ENCODE measurements at regions of chr1 and their contacts with region 1.

Region 1: DNA sequence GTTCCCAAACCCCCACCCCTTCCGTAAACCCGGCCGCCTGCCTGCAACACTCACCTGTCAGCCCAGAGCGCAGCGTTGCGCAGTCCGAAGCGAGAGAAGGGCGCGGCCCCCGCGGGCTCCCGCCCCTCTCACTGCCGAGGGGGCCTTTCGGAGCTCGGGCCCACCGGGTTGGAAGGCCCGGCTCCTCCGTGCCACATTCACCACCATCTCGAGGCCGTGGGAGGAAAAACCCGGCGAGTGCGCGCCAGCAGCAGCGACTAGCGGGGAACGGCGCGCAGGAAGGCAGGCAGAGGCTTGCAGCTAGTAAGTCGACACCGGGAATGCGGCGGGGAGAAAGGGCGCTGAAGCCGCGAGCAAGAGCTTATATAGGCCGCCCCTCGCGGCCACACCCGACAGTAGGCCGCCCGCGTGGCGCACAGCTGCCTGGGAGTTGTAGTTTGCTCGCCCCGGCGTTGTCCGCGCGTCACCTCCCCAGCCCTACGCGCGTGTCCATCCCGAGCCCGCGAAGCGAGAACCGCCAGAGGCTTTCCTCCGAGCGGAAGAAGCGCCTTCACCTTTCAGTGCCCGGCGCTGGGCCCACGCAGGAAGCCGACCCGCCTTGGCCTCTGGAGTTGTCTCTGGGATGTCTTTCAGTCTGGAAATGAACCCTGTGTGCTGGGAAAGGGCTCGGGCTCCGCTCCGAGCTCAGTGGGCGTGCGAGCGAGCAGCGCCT is 10.4 kb upstream of the RAB42 start:
- DNase-seq: peak; percentile 95
- ATAC-seq: peak; percentile 73
- H3K4me3 Mint-ChIP-seq: peak overlapping the region; percentile 92
- H3K27ac Mint-ChIP-seq: peak overlapping the region; percentile 83; the same call in 1 of the 2 replicates
- H3K4me1 Mint-ChIP-seq: peaks cover 24% of the 10 kb centered on the region
- H3K27me3 Mint-ChIP-seq: no peaks in the 10 kb centered on the region
- CTCF ChIP-seq: no peak

Region 2: DNA sequence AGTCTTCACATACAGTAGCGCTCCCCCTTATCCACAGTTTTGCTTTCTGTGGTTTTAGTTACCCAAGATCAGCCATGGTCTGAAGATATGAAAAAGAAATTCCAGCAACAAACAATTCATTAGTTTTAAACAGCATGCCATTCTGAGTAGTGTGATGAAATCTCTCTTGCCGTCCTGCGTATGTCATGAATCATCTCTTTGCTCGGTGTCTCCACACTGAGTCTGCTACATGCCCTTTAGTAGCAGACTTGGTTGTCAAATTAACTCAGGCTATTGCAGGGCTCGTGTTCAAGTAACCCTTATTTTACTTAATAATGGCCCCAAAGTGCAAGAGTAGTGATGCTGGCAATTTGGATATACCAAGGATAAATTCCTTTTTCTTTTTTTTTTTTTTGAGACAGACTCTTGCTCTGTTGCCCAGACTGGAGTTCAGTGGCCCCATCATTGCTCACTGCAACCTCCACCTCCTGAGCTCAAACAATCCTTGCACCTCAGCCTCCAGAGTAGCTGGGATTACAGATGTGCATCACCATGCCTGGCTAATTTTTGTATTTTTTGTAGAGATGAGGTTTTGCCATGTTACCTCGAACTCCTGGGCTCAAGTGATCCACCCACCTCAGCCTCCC is 189.6 kb before region 1 on chr1:
- CTCF ChIA-PET with region 1: no interaction called
- POLR2A ChIA-PET with region 1: no interaction called
- DNase-seq: no peak
- ATAC-seq: no peak
- H3K4me3 Mint-ChIP-seq: no peak overlapping the region
- H3K27ac Mint-ChIP-seq: peak overlapping the region; percentile 92
- H3K4me1 Mint-ChIP-seq: peaks cover 2% of the 10 kb centered on the region; the same call in 1 of the 2 replicates
- H3K27me3 Mint-ChIP-seq: no peaks in the 10 kb centered on the region
- CTCF ChIP-seq: no peak

Region 3: GRCh38 chr1:28505406-28506187 is 76.1 kb before region 1 on chr1 and contains the start of gene RCC1:
- CTCF ChIA-PET with region 1: no interaction called
- POLR2A ChIA-PET with region 1: interaction called, 19 read pairs
- DNase-seq: peak; percentile 97
- ATAC-seq: peak; percentile 76
- H3K4me3 Mint-ChIP-seq: peak within 1 kb of the TSS; percentile 99
- H3K27ac Mint-ChIP-seq: peak within 1 kb of the TSS; percentile 99
- H3K4me1 Mint-ChIP-seq: peaks cover 30% of the 10 kb centered on the region
- H3K27me3 Mint-ChIP-seq: peaks cover 7% of the 10 kb centered on the region
- CTCF ChIP-seq: no peak
- total RNA-seq, gene RCC1: 93.2 to 103 TPM (median 98.2 TPM) in 3 replicates

Region 4: GRCh38 chr1:28518000-28518744 is 63.5 kb before region 1 on chr1:
- CTCF ChIA-PET with region 1: interaction called, 3 read pairs
- POLR2A ChIA-PET with region 1: interaction called, 22 read pairs
- DNase-seq: peak; percentile 96
- ATAC-seq: peak; percentile 40
- H3K4me3 Mint-ChIP-seq: peak overlapping the region; percentile 80
- H3K27ac Mint-ChIP-seq: peak overlapping the region; percentile 87
- H3K4me1 Mint-ChIP-seq: peaks cover 44% of the 10 kb centered on the region
- H3K27me3 Mint-ChIP-seq: no peaks in the 10 kb centered on the region
- CTCF ChIP-seq: peak; percentile 99

Region 5: DNA sequence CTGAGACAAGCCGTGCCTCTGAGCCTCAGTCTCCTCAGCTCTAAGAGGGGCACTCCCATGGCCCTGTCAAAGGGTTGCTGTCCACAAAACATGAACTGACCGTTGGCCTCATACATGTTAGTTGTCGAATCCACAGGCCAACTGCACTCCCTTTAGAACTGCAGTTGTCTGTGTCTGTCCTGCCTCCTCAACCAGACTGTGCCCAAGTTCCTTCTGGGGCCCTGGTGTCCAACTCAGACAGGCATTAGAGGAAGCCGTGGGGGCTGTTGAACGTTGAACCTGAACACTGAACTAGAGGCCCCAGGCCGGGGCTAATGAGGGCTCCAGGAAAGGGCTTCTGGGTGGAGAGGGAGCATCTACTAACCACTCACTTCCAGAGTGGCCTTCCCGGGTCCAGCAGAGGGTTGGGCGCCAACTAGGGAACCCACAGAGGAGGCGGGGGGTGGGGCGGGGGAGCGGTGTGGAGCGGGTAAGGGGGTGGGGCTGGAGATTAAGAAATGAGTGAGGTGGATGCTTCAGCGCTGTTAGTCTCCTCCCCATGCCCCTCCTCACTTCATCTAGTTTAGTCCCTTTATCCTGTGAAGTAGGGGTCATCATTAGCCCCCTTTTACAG is 10.1 kb after region 1 on chr1 and contains the start of gene RAB42:
- CTCF ChIA-PET with region 1: interaction called, 3 read pairs
- POLR2A ChIA-PET with region 1: interaction called, 18 read pairs
- DNase-seq: peak; percentile 48
- ATAC-seq: peak; percentile 67
- H3K4me3 Mint-ChIP-seq: peak within 1 kb of the TSS; percentile 82
- H3K27ac Mint-ChIP-seq: peak within 1 kb of the TSS; percentile 70; the same call in 1 of the 2 replicates
- H3K4me1 Mint-ChIP-seq: peaks cover 43% of the 10 kb centered on the region
- H3K27me3 Mint-ChIP-seq: peaks cover 15% of the 10 kb centered on the region
- CTCF ChIP-seq: no peak
- total RNA-seq, gene RAB42: 8.9 to 12.6 TPM (median 10.1 TPM) in 3 replicates

Region 6: DNA sequence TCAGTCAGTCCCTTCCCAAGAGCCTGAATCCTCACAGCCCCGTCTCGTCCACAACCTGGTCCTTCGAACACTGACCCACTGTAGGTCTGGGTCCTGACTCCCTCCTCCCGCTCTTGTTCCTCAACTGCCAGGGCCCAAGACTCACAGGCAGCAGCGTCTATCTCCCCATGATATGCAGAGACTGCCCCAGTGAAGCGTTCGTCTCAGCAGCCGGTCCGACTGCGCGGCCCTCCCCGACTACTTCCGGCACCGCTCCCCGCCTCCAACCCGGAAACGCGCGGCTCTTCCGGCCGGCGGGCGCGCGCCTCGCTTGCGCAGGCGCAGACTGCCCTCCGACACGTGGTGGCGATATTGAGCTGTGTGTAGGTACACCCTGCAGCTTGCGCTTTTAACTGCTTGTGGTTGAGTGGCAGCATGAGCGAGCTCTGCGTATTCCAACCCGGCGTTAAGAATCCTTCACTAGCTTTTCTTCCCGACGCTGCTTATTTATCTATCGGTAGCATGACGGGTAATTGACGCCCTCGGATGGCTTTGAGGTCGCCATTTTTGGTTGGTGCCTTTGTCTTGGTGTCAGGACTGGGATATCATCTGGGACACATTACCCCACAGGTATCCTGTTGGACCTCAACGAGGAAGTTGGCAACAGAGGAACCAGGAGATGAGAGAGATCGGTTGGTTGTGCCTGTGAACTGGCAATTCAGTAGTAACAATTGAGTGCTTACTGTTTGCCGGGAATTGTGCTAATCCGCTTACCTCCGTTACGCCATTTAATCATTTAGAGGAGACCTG is 61.3 kb after region 1 on chr1 and contains the start of gene TAF12:
- CTCF ChIA-PET with region 1: interaction called, 4 read pairs
- POLR2A ChIA-PET with region 1: interaction called, 15 read pairs
- DNase-seq: peak; percentile 91
- ATAC-seq: peak; percentile 88
- H3K4me3 Mint-ChIP-seq: peak within 1 kb of the TSS; percentile 99
- H3K27ac Mint-ChIP-seq: peak within 1 kb of the TSS; percentile 99
- H3K4me1 Mint-ChIP-seq: peaks cover 23% of the 10 kb centered on the region
- H3K27me3 Mint-ChIP-seq: no peaks in the 10 kb centered on the region
- CTCF ChIP-seq: peak; percentile 31; the same call in 1 of the 2 replicates
- total RNA-seq, gene TAF12: 18.6 to 23.3 TPM (median 22.1 TPM) in 3 replicates

Measured in WTC11 (cell line).